MCF 10A (cell line): ENCODE measurements at regions of chr11 and their contacts with region 1.

Region 1: DNA sequence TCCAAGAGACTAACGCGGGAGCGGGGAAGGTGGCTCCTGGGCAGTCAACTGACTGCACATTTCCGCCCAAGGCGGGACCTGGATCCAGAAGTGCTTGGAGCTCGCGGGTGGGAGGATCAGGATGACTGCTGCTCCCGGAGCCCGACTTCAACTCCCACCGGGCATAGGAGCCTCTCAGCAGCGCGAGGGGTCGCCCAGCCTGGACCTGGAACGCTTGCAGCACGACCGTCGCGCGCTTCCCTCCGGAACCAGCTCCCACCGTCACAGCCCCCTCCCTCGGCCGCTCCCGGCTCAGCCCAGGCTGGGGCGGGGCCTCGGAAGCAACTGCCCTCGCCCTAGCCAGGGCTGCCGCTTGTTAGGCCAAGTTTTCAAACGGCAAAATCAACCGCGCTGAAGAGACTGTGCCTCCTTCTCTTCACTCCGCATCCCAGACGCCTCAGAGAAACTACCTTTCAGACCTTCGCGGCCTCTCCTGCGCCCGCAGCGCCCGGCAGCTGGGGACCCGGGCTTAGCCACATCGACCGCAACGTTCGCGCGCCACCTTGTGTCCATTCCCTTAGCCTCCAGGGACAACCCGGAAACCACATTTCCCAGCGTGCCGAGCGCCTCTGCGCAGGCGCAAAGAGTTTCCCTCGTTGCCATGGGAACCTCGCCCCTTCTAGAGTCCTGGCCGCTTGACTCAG is 14.0 kb downstream of the SSH3 start:
- DNase-seq: peak; percentile 97
- H3K4me3 Mint-ChIP-seq: peak overlapping the region; percentile 99
- H3K27ac Mint-ChIP-seq: peak overlapping the region; percentile 93
- H3K4me1 Mint-ChIP-seq: peaks cover 28% of the 10 kb centered on the region
- H3K27me3 Mint-ChIP-seq: no peaks in the 10 kb centered on the region
- CTCF ChIP-seq: peak; percentile 87

Region 2: DNA sequence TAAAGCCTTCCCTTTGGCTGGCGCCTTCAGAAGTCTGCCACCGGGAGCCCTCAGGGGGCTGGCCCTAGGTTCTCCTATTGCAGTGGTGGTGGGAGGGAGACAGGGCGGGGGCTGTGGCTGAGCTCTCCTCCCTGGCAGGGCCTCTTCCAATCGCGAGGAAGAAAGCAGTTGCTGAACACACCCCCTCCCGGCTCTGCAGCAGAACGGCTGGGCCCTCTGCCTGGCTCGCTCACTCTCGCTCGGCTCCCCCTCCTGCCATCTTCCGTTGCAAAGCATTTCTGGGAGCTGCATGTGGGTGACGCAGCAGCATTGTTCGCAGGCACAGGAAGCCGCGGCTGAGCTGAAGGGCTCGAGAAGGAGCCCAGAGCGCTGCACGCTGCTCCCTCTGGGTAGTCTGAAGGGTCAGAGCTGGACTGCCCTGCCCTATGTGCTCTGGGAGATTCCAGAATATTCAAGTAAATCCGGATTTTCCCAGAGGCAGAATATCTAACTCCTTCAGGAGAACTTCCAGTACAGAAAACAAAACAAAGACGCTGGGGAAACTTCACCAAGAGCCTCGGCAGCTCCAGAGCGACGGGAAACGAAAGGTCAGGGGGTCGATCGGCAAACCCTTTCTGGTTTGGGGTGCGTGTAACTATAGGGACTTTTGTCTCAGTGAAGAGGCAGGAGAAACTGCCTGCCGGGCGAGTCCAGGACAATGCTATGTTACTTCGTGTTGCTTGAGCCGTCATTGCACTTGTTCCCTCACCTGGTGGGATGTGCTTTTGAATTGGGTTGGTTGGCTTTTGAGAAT is 77.4 kb before region 1 on chr11:
- CTCF ChIA-PET with region 1: interaction called, 5 read pairs
- POLR2A ChIA-PET with region 1: interaction called, 30 read pairs
- intact Hi-C with region 1: no loop called
- DNase-seq: peak; percentile 98
- H3K4me3 Mint-ChIP-seq: peak overlapping the region; percentile 96
- H3K27ac Mint-ChIP-seq: peak overlapping the region; percentile 97
- H3K4me1 Mint-ChIP-seq: peaks cover 24% of the 10 kb centered on the region
- H3K27me3 Mint-ChIP-seq: no peaks in the 10 kb centered on the region
- CTCF ChIP-seq: no peak

Region 3: DNA sequence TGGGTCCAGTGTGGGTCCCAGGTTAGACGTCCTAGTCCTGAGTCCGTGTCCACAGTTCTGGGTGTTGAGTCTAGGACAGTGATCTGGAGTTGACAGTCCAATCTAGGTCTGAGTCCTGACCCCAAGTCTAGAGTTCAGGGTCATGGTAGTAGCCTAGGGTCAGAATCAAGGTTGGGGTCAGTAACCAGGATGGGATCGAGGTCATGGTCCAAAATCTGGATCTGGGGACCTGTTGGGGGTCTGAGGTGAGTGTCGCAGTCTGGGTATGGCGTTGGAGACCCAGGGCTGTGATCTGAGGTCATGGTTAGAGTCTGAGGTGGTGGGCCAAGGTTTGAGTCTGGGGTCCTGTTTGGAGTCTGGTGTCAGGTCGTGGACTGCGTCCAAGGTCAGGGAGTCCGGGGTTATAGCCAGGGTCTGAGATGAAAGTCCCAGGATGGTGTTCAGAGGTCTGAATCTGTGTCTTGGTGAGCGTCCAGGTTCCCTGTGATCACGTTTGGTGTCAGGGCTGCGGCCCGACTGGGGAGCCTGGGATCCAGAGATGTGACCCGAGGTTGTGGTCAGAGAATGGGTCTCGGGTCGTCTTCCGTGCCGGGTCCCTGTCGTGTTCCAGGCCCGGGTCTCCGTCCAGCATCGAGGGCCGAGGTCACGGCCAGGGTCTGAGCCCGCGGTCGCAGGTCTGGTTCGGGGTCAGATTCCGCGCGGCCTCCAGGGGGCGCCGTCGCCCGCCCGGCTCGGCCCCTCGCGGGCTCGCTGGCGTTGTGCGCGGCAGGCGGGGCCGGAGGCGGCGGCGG is 51.5 kb before region 1 on chr11:
- CTCF ChIA-PET with region 1: interaction called, 104 read pairs
- POLR2A ChIA-PET with region 1: interaction called, 93 read pairs
- intact Hi-C with region 1: loop called (anchors 1 kb)
- DNase-seq: peak; percentile 57
- H3K4me3 Mint-ChIP-seq: peak overlapping the region; percentile 93
- H3K27ac Mint-ChIP-seq: peak overlapping the region; percentile 89
- H3K4me1 Mint-ChIP-seq: peaks cover 33% of the 10 kb centered on the region
- H3K27me3 Mint-ChIP-seq: no peaks in the 10 kb centered on the region
- CTCF ChIP-seq: peak; percentile 57

Region 4: DNA sequence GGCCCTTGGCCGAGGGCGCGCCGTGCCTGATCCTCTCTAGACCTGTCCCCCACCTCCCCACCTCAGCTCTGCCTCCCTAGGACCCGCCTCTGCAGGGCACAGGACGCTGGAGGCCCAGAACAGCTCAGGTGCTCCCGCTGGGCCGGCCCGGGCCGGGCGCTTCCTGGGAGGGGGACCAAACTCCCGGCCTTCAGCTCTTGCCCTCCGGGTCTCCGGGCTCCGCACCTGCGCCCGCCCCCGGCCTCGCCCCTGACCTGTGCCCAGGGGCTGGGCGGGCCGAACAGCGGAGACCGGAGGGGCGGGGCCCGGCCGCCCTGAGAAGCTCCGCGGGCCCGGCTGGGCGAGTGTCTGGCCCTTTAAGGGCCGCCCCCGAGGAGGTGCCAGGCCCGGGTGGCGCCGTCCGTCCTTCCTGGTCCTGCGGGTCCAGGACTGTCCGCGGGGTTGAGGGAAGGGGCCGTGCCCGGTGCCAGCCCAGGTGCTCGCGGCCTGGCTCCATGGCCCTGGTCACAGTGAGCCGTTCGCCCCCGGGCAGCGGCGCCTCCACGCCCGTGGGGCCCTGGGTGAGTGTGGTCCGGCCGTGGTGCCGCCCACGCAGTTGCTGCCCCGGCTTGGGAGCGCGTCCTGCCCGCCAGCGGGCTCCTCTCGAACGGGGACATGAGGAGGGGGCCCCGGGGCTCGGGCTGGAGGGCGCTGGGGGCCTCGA is 14.1 kb before region 1 on chr11 and contains the start of gene SSH3:
- CTCF ChIA-PET with region 1: interaction called, 8 read pairs
- POLR2A ChIA-PET with region 1: interaction called, 107 read pairs
- intact Hi-C with region 1: loop called (anchors 2 kb)
- DNase-seq: peak; percentile 81
- H3K4me3 Mint-ChIP-seq: peak within 1 kb of the TSS; percentile 70
- H3K27ac Mint-ChIP-seq: peak within 1 kb of the TSS; percentile 23
- H3K4me1 Mint-ChIP-seq: peaks cover 11% of the 10 kb centered on the region
- H3K27me3 Mint-ChIP-seq: no peaks in the 10 kb centered on the region
- CTCF ChIP-seq: no peak
- total RNA-seq, gene SSH3: 31.7 and 38.0 TPM in 2 replicates

Region 5: DNA sequence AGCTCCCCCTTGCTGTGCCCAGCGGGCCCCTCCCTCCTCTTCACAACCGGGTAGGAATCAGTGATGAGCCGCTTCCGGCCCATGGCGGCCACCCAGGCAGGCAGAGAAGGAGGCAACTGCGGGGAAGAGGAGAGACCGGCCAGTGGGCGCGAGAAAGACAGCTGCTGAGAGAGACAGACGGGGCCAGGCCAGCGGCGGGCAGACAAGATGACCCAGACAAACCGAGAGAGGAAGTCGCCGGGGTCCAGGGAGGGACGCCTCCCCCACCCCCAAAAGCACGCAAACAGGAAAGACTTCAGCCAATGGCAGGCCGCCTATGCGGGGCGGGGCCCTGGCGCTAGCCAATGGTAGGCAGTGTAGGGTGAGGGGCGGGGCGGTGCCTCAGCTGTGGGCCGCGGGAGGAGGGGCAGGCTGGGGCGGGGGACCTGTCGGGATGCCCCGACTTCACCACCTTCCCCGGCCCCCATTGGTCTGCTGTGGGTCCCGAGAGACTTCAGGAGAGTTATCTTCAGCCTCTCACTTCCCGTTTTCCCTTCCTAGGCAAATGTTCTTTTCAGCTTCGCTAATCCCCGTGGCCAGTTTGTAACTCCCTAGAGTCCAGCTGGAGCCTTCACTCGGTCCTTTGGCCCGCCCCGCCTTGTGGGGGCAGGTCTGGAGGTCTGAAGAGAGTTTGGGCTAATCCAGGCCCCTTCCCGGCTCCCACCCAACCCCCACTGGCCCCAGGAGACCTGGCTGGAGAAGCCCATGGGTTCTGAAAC is 36.1 kb after region 1 on chr11 and contains the start of gene POLD4:
- CTCF ChIA-PET with region 1: interaction called, 21 read pairs
- POLR2A ChIA-PET with region 1: interaction called, 41 read pairs
- intact Hi-C with region 1: no loop called
- DNase-seq: peak; percentile 92
- H3K4me3 Mint-ChIP-seq: peak within 1 kb of the TSS; percentile 85
- H3K27ac Mint-ChIP-seq: peak within 1 kb of the TSS; percentile 91
- H3K4me1 Mint-ChIP-seq: peaks cover 58% of the 10 kb centered on the region
- H3K27me3 Mint-ChIP-seq: no peaks in the 10 kb centered on the region
- CTCF ChIP-seq: no peak
- total RNA-seq, gene POLD4: 54.8 and 79.9 TPM in 2 replicates